ENCODE measurements at regions of chr1 and their contacts with region 1.

Region 1: DNA sequence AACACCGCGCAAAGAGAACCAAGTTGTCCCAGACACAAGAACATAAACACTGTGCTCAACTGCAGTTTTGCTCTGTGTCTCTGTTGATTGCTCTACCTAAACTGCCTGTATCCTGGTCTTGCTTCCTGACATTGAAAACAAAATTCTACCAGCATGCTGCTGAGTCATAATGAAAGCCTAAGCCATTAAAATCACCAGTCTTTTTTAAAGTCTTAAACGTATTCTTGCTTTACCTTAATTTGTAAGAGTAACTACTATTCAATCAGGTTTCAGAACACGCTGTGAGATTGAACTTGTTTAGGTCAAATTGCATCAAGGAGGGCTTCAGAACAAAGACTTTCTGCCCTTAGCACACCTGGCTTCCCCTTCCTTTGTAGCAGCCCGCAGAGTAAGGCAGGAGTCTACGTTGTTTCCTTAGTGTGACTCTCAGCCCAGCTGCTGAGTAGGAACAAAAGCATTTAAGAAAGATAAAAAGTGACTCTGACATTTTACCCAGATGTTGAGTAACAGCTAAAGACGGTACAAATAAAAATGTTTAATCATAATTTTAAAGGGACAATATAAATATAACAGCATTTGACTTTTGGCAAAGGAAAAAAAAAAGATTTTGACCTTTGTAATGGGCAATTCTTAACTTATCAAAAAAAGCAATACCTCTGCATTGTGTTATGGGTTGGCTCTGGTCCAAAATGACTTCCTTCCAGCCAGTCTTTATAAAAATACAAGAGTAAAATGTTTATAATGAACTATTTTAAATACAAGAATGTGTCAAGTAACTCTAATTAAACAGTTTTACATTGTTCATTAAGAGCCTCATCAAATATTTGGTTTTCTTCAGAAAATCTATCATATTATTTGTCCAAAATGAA is 186.9 kb upstream of the ADGRL4 start:
- DNase-seq: peak; percentile 84
- ATAC-seq: peak; percentile 89
- H3K4me3 ChIP-seq: peak overlapping the region; percentile 57
- H3K27ac ChIP-seq: peak overlapping the region; percentile 84
- H3K4me1 ChIP-seq: peaks cover 31% of the 10 kb centered on the region
- H3K27me3 ChIP-seq: no peaks in the 10 kb centered on the region
- CTCF ChIP-seq: no peak

Region 2: DNA sequence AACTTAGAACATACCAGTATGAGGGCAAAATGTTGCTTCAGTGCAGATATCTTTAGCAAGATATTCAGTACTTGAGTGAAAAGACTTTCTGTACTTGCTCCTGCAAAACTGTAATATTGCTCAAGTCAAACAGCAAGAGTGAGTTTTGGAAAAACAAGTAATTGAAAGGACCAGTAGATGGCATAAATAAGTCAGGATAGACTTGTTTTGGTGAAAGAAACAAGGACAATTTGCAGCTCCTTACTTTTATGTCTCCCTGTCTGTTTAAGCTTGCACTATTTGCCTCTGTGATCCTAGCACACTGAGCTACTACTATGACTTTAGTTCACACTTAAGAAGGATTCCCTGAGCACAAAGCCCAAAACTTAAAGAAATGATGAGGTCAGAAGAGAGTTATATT is 504.7 kb before region 1 on chr1:
- CTCF ChIA-PET with region 1: interaction called, 5 read pairs
- POLR2A ChIA-PET with region 1: no interaction called
- intact Hi-C with region 1: loop called (anchors 1 kb)
- DNase-seq: peak; percentile 66
- ATAC-seq: peak; percentile 41
- H3K4me3 ChIP-seq: no peak overlapping the region
- H3K27ac ChIP-seq: peak overlapping the region; percentile 55
- H3K4me1 ChIP-seq: peaks cover 57% of the 10 kb centered on the region
- H3K27me3 ChIP-seq: no peaks in the 10 kb centered on the region
- CTCF ChIP-seq: peak; percentile 74

Region 3: GRCh38 chr1:78911956-78912880 is 281.2 kb before region 1 on chr1:
- CTCF ChIA-PET with region 1: no interaction called
- POLR2A ChIA-PET with region 1: no interaction called
- intact Hi-C with region 1: loop called (anchors 5 kb)
- DNase-seq: no peak
- ATAC-seq: no peak
- H3K4me3 ChIP-seq: no peak overlapping the region
- H3K27ac ChIP-seq: no peak overlapping the region
- H3K4me1 ChIP-seq: no peaks in the 10 kb centered on the region
- H3K27me3 ChIP-seq: no peaks in the 10 kb centered on the region
- CTCF ChIP-seq: no peak

Region 4: GRCh38 chr1:79090985-79091384 is 102.5 kb before region 1 on chr1:
- CTCF ChIA-PET with region 1: no interaction called
- POLR2A ChIA-PET with region 1: no interaction called
- intact Hi-C with region 1: loop called (anchors 5 kb)
- DNase-seq: peak; percentile 53
- ATAC-seq: peak; percentile 95
- H3K4me3 ChIP-seq: no peak overlapping the region
- H3K27ac ChIP-seq: no peak overlapping the region
- H3K4me1 ChIP-seq: peaks cover 11% of the 10 kb centered on the region
- H3K27me3 ChIP-seq: no peaks in the 10 kb centered on the region
- CTCF ChIP-seq: no peak

Region 5: DNA sequence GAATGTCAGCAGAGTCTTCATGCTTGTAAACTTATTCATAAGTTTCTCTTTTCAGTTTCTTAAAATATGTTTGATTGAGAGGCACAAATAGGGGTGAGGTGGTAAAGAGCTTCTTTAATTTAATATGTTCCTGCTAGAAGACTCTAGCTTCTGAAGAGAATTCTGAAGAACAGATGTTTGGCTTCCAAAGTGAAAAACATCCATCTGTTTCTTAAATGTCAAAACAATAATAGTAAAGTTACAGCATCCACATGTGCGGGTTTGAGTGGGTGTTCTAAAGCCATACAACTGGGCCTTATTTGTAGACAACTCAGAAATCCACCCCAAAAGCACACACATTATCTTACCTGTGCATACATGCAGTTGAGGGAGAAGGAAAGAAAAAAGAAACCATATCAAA is 42.9 kb before region 1 on chr1:
- CTCF ChIA-PET with region 1: no interaction called
- POLR2A ChIA-PET with region 1: interaction called, 4 read pairs
- intact Hi-C with region 1: loop called (anchors 1 kb)
- DNase-seq: no peak
- ATAC-seq: no peak
- H3K4me3 ChIP-seq: no peak overlapping the region
- H3K27ac ChIP-seq: no peak overlapping the region
- H3K4me1 ChIP-seq: peaks cover 18% of the 10 kb centered on the region
- H3K27me3 ChIP-seq: no peaks in the 10 kb centered on the region
- CTCF ChIP-seq: no peak